Activated T-helper 1 cell treated with anti-CD3 and anti-CD28 coated beads, Interleukin-12 subunit alpha, Interleukin-12 subunit beta, Interleukin-2, Interleukin-4 antibody, amounts not matched to agents 30 ng/mL and 10 ng/mL and 1 ng/mL, durations not matched to agents 14 hours and 24 hours and 36 hours (primary cell): ENCODE measurements at regions of chr19 and their contacts with region 1.

Region 1: DNA sequence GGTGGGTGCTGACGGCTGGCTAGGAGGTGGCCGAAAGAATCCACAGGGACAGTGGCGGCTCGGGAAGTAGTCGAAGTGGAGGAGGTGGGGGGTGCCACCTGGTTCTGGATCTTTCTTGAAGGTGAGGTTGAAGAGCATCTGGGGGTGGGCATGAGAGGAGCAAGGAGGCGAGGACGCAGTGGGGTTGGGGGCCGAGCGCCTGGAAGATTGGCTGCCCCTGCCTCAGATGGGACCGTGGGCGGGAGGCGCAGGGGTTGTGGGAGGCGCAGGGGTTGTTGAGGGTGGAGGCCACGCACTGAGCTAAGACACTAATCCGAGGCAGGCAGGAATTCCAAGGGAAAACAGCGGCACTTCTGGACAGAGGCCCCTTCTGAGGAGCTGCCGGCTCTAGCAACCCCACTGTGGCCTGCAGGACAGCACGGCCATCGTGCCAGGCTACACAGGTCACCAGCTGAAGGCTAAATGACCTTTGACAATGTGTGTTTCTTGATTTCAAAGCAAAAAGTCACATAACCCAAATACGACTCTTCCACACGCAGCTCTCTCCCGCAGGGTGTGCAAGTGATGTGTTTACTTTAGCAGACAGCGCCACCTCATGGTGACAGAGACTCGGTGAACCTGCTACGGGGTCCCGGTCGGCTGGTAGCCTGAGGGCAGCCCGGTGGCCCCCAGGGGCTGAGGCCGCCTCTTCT is 44.1 kb upstream of the RANBP3 start:
- DNase-seq: peak; percentile 68
- H3K4me3 Mint-ChIP-seq: no peak overlapping the region
- H3K27ac Mint-ChIP-seq: no peak overlapping the region
- H3K4me1 Mint-ChIP-seq: no peaks in the 10 kb centered on the region
- H3K27me3 Mint-ChIP-seq: peaks cover 2% of the 10 kb centered on the region

Region 2: GRCh38 chr19:5345895-5346386 is 676.1 kb before region 1 on chr19:
- intact Hi-C with region 1: no loop called
- DNase-seq: no peak
- H3K4me3 Mint-ChIP-seq: no peak overlapping the region
- H3K27ac Mint-ChIP-seq: no peak overlapping the region
- H3K4me1 Mint-ChIP-seq: no peaks in the 10 kb centered on the region
- H3K27me3 Mint-ChIP-seq: peaks cover 19% of the 10 kb centered on the region

Region 3: GRCh38 chr19:5803752-5804515 is 218.1 kb before region 1 on chr19:
- intact Hi-C with region 1: loop called (anchors 1 kb)
- DNase-seq: peak; percentile 92
- H3K4me3 Mint-ChIP-seq: peak overlapping the region; percentile 80
- H3K27ac Mint-ChIP-seq: peak overlapping the region; percentile 63
- H3K4me1 Mint-ChIP-seq: peaks cover 13% of the 10 kb centered on the region
- H3K27me3 Mint-ChIP-seq: peaks cover 35% of the 10 kb centered on the region

Region 4: DNA sequence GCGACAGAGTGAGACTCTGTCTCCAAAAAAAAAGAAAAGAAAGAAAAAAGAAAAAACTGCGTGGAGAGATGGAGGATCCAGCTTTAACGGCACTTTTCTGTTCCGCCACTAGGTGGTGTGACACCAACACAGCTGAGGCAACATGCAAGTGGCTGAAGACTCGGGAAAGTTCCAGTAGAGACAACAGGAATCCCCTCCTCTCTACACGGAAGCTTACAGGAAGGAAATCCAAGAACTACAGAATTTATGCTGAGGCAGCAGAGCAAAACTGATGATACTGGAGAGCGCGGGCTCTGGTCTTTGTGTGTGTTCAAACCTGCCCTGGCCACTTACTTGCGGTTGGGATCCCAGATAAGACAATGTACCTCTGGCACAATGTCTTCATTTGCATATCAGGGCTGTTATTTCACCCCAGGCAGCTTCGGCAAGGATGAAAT is 54.0 kb before region 1 on chr19:
- intact Hi-C with region 1: loop called (anchors 1 kb)
- DNase-seq: peak; percentile 52
- H3K4me3 Mint-ChIP-seq: no peak overlapping the region
- H3K27ac Mint-ChIP-seq: peak overlapping the region; percentile 54
- H3K4me1 Mint-ChIP-seq: peaks cover 81% of the 10 kb centered on the region
- H3K27me3 Mint-ChIP-seq: no peaks in the 10 kb centered on the region

Region 5: DNA sequence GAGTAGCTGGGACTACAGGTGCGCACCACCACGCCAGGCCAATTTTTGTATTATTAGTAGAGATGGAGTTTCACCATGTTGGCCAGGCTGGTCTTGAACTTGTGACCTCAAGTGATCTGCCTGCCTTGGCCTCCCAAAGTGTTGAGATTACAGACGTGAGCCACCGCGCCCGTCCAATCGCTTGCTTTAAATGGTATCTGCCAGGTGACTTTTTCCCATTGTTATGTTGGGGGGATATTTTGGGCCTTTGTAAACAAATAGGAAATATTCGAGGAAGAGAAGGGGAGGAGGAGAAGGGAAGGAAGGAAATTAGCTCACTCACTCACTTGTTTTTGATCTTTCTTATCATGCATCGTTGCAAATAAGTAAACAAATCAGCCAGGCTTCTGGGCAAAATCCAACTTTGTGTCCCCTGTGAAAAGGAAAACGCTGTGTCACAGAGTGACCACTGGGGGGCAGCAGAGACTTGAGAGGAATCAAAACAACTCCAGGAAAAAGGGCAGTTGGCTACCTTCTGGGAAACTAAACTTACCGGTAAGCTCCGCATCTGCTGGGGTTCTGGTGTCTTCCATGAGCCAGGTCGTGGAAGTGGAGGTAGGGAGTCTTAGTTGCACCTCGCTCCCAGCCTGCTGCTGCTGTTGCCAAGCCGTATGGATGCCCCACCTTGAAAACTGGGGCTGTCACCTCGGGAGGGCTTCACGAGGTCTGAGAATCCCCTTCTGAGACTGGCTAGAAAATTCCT is 34.8 kb before region 1 on chr19:
- intact Hi-C with region 1: loop called (anchors 1 kb)
- DNase-seq: peak; percentile 57
- H3K4me3 Mint-ChIP-seq: peak overlapping the region; percentile 75
- H3K27ac Mint-ChIP-seq: peak overlapping the region; percentile 55
- H3K4me1 Mint-ChIP-seq: peaks cover 44% of the 10 kb centered on the region
- H3K27me3 Mint-ChIP-seq: no peaks in the 10 kb centered on the region